ENCODE measurements at regions of chr9 and their contacts with region 1.

Region 1: DNA sequence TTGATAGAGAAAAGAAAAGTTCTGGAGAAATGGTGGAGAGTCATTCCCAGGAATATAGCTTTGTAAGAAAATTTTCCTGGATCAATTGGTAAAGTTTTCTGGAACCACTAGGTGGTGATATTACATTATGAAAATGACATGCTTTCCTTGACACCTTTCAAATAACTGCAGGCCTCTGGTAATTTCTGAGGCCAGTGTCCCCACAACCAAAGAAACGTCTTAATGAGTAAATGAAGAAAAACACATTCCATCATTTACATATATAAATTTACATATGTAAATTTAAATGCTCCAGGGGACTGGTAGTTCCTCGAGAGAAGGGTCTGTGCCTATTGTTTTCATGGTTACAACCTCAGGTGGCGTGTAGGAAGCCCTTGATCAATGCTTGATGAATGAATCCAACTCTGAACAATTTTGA is 17.2 kb upstream of the RGS3 start:
- DNase-seq: no peak
- ATAC-seq: no peak
- H3K4me3 ChIP-seq: no peak overlapping the region
- H3K27ac ChIP-seq: peak overlapping the region in 1 of 2 donors; percentile 44
- H3K4me1 ChIP-seq: no peaks in the 10 kb centered on the region
- H3K27me3 ChIP-seq: no peaks in the 10 kb centered on the region

Region 2: GRCh38 chr9:113523421-113524236 is 77.3 kb after region 1 on chr9:
- intact Hi-C with region 1: no loop called
- DNase-seq: peak in 1 of 2 donors; percentile 84
- ATAC-seq: peak; percentile 22
- H3K4me3 ChIP-seq: no peak overlapping the region
- H3K27ac ChIP-seq: peak overlapping the region; percentile 20 to 68
- H3K4me1 ChIP-seq: peaks cover 2 to 11% of the 10 kb centered on the region in 2 donors
- H3K27me3 ChIP-seq: no peaks in the 10 kb centered on the region

Region 3: GRCh38 chr9:113657703-113658544 is 211.6 kb after region 1 on chr9:
- intact Hi-C with region 1: loop called (anchors 1 to 2 kb)
- DNase-seq: peak; percentile 91 to 94
- ATAC-seq: peak; percentile 84
- H3K4me3 ChIP-seq: no peak overlapping the region
- H3K27ac ChIP-seq: no peak overlapping the region
- H3K4me1 ChIP-seq: no peaks in the 10 kb centered on the region
- H3K27me3 ChIP-seq: no peaks in the 10 kb centered on the region